Vagina (tissue), 2 donors: ENCODE measurements at regions of chr20 and their contacts with region 1.

Region 1: GRCh38 chr20:53692413-53693067 is 98.9 kb upstream of the ZNF217 start:
- DNase-seq: no peak
- H3K4me3 ChIP-seq: no peak overlapping the region
- H3K27ac ChIP-seq: no peak overlapping the region
- H3K4me1 ChIP-seq: no peaks in the 10 kb centered on the region
- H3K27me3 ChIP-seq: no peaks in the 10 kb centered on the region
- CTCF ChIP-seq: no peak
- POLR2A ChIP-seq: no peak

Region 2: GRCh38 chr20:52812231-52812847 is 880.2 kb before region 1 on chr20:
- intact Hi-C with region 1: loop called (anchors 10 kb)
- DNase-seq: no peak
- H3K4me3 ChIP-seq: no peak overlapping the region
- H3K27ac ChIP-seq: no peak overlapping the region
- H3K4me1 ChIP-seq: no peaks in the 10 kb centered on the region
- H3K27me3 ChIP-seq: no peaks in the 10 kb centered on the region
- CTCF ChIP-seq: no peak
- POLR2A ChIP-seq: no peak

Region 3: DNA sequence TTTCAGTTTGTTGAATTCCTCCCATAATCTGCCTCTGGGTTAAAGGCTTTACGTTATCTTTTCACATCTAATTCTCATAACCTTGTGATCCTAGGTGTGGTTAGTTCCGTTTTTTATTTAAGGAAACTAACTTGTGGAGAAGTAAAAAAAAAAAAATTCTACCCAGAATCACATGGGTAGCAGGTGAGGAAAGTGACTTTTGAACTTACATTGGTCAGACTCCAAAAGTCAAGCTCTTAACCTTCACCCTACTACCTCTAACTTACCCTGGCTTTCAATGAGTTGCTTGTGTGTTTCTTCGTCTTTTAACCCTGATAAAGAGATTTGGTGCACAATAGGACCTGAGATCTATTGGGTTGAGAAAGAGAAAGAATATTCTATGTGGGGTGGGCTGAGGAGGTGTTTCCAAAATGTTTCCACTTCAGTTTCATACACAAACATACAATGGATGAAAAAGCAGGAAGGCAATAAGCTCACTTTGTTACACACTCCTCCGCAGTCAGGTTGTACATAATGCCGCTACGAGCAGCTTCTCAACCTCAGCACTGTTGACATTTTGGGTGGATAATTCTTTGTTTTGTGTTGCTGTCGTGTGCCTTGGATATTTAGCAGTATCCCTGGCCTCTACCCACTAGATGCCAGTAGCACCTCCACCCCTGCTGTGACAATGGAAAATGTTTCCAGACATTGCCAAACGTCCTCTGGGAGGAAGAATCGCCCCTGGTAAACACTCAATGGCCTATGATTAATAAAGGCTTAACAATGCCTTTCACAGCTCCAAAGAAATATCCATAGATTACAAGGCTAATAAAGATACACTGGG is 94.1 kb after region 1 on chr20:
- intact Hi-C with region 1: no loop called
- DNase-seq: no peak
- H3K4me3 ChIP-seq: no peak overlapping the region
- H3K27ac ChIP-seq: peak overlapping the region; percentile 40
- H3K4me1 ChIP-seq: peaks cover 8% of the 10 kb centered on the region
- H3K27me3 ChIP-seq: no peaks in the 10 kb centered on the region
- CTCF ChIP-seq: no peak
- POLR2A ChIP-seq: no peak